ENCODE measurements at regions of chr10 and their contacts with region 1.

Region 1: GRCh38 chr10:128064108-128064969 is 61.9 kb downstream of the MKI67 start:
- DNase-seq: peak; percentile 92
- ATAC-seq: peak; percentile 82
- H3K4me3 Mint-ChIP-seq: peak overlapping the region; percentile 72
- H3K27ac Mint-ChIP-seq: peak overlapping the region; percentile 94
- H3K4me1 Mint-ChIP-seq: peaks cover 72% of the 10 kb centered on the region
- H3K27me3 Mint-ChIP-seq: no peaks in the 10 kb centered on the region
- CTCF ChIP-seq: no peak

Region 2: DNA sequence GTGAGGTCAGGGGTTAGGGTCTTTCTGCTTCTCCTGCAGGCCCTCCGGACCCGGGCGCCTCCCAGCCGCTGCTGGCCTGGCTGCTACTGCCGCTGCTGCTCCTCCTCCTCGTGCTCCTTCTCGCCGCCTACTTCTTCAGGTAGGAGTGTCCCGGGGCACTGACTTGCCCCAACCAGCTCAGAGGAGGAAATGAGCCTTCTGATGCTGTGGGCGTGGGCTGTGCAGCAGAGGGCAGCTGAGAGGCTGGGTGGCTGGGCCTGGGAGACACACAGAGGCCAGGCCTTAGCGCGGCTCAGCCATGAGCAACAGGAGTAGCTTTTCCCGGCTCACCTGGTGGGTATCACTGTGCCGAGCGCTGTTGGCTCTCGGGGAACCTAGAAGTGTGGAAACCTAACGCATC is 17.0 kb before region 1 on chr10:
- CTCF ChIA-PET with region 1: interaction called, 37 read pairs
- POLR2A ChIA-PET with region 1: interaction called, 133 read pairs
- intact Hi-C with region 1: loop called (anchors 2 kb)
- DNase-seq: peak; percentile 93
- ATAC-seq: peak; percentile 98
- H3K4me3 Mint-ChIP-seq: peak overlapping the region; percentile 90
- H3K27ac Mint-ChIP-seq: peak overlapping the region; percentile 95
- H3K4me1 Mint-ChIP-seq: peaks cover 41% of the 10 kb centered on the region
- H3K27me3 Mint-ChIP-seq: no peaks in the 10 kb centered on the region
- CTCF ChIP-seq: no peak

Region 3: GRCh38 chr10:128125944-128126764 is 61.8 kb after region 1 on chr10 and contains the start of gene MKI67:
- CTCF ChIA-PET with region 1: interaction called, 3 read pairs
- POLR2A ChIA-PET with region 1: interaction called, 13 read pairs
- intact Hi-C with region 1: no loop called
- DNase-seq: peak; percentile 96
- ATAC-seq: peak; percentile 91
- H3K4me3 Mint-ChIP-seq: peak within 1 kb of the TSS; percentile 96
- H3K27ac Mint-ChIP-seq: peak within 1 kb of the TSS; percentile 90
- H3K4me1 Mint-ChIP-seq: peaks cover 28% of the 10 kb centered on the region
- H3K27me3 Mint-ChIP-seq: peaks cover 30% of the 10 kb centered on the region
- CTCF ChIP-seq: no peak
- total RNA-seq, gene MKI67: 205 to 230 TPM